Ovary (tissue), 10 donors: ENCODE measurements at regions of chr10 and their contacts with region 1.

Region 1: DNA sequence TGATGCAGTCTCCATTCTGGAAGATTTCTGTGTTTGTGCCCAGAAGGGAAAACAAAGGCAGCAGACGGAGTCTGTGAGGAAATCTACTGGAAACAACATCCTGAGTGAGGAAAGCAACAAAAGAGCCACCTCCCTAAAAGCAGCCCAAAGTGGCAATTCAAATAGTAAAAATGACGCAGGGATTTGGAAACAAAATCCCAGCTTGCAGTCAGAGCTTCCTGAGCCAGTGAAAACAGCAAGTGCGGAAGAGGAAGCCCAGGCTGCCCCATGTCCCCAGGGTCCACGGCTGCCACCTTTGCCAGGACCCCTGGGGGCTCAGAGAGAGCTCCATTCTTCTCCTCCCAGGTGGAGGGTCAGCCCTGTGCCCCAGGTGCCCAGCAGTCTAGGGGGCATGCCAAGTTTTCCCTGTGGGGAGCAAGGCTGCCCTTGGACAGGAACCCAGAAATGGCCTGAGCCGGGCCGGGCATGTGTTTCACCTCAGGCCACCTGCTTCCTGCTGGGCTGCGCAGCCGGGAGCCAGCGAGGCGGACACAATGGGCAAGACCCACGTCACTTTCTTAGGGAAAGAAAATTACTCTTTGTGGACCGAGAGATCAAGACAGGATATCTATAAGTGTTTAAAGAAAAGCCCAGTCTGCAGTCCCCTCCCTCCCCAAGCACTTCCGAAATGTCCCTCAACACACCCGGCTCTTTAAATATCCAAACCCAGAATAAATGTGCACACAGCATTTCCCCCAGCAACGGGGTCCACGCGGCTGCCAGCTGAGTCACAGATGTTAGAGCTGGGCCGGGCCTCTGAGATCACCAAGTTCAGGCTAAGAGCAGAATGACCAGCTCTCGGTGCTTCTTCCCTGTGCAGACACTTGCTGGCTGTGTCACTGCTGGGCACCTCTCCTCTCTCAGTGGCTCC is 231.1 kb downstream of the ARHGAP12 start:
- DNase-seq: peak; percentile 70 to 79 (median 72)
- H3K4me3 ChIP-seq: no peak overlapping the region
- H3K27ac ChIP-seq: peak overlapping the region; percentile 75 to 90
- H3K4me1 ChIP-seq: peaks cover 18% of the 10 kb centered on the region
- H3K27me3 ChIP-seq: no peaks in the 10 kb centered on the region
- CTCF ChIP-seq: no peak
- EP300 ChIP-seq: peak; percentile 52
- POLR2A ChIP-seq: no peak

Region 2: DNA sequence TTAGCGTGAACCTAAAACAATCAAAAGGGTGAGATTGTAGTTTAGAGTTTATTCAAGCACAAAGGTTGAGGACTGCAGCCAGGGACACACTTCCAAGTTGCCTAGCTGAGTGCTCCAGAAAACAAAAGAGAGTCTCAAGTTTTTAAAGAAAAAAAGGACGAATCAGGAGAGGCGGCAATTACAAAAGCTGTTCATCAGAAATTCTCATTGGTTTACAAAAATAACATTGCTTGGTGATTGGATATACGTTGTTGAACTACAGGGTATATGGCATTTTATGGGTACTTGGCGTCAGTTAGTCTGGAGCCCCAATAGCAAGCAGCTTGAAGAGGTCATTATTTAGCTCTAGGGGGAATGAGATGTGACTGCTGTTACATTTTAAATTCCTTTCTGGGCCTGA is 677.3 kb before region 1 on chr10:
- intact Hi-C with region 1: loop called in 1 of 4 experiments (anchors 10 kb)
- DNase-seq: no peak
- H3K4me3 ChIP-seq: no peak overlapping the region
- H3K27ac ChIP-seq: no peak overlapping the region
- H3K4me1 ChIP-seq: peaks cover 4% of the 10 kb centered on the region
- H3K27me3 ChIP-seq: no peaks in the 10 kb centered on the region
- CTCF ChIP-seq: no peak
- EP300 ChIP-seq: no peak
- POLR2A ChIP-seq: no peak

Region 3: GRCh38 chr10:31982111-31982510 is 284.6 kb after region 1 on chr10:
- intact Hi-C with region 1: loop called in 1 of 4 experiments (anchors 5 kb)
- DNase-seq: no peak
- H3K4me3 ChIP-seq: no peak overlapping the region
- H3K27ac ChIP-seq: no peak overlapping the region
- H3K4me1 ChIP-seq: no peaks in the 10 kb centered on the region
- H3K27me3 ChIP-seq: no peaks in the 10 kb centered on the region
- CTCF ChIP-seq: no peak
- EP300 ChIP-seq: no peak
- POLR2A ChIP-seq: no peak